Endothelial cell of umbilical vein (primary cell): ENCODE measurements at regions of chr12 and their contacts with region 1.

Region 1: GRCh38 chr12:14769969-14770495 is 33.2 kb downstream of the WBP11 start:
- DNase-seq: peak; percentile 77
- H3K4me3 ChIP-seq: peak overlapping the region; percentile 22 to 82 (median 70)
- H3K27ac ChIP-seq: peak overlapping the region; percentile 91
- H3K4me1 ChIP-seq: peaks cover 7% of the 10 kb centered on the region
- H3K27me3 ChIP-seq: no peaks in the 10 kb centered on the region
- CTCF ChIP-seq: peak; percentile 73 to 87
- POLR2A ChIP-seq: peak; percentile 25

Region 2: GRCh38 chr12:14257734-14258574 is 512.1 kb before region 1 on chr12:
- CTCF ChIA-PET with region 1: interaction called, 3 read pairs
- POLR2A ChIA-PET with region 1: no interaction called
- dilution Hi-C with region 1: no loop called
- intact Hi-C with region 1: loop called (anchors 2 kb)
- DNase-seq: peak; percentile 99
- H3K4me3 ChIP-seq: no peak overlapping the region
- H3K27ac ChIP-seq: peak overlapping the region; percentile 87
- H3K4me1 ChIP-seq: peaks cover 46% of the 10 kb centered on the region
- H3K27me3 ChIP-seq: no peaks in the 10 kb centered on the region
- CTCF ChIP-seq: no peak
- POLR2A ChIP-seq: no peak

Region 3: DNA sequence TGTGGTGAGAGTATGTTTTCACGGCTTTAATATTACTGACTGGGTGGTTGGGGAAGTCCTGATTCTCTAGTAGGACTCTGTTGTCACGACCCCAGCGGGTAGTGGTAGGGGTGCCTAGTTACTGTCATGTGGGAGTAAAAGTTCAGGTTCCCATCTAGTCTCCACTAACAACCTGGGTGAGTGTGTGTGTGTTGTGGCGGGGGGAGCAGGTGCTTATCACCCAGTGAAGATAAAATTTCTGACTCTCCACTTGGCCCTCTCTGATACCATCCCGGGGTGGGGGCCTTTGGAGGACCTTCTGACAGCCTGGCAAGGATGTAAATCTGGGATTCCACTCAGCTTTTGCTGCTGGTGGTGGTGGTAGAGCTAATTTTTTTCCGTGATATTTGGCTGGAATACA is 38.2 kb before region 1 on chr12:
- CTCF ChIA-PET with region 1: no interaction called
- POLR2A ChIA-PET with region 1: no interaction called
- dilution Hi-C with region 1: no loop called
- intact Hi-C with region 1: no loop called
- DNase-seq: no peak
- H3K4me3 ChIP-seq: no peak overlapping the region
- H3K27ac ChIP-seq: no peak overlapping the region
- H3K4me1 ChIP-seq: no peaks in the 10 kb centered on the region
- H3K27me3 ChIP-seq: peaks cover 5 to 6% of the 10 kb centered on the region in 2 experiments
- CTCF ChIP-seq: no peak
- POLR2A ChIP-seq: no peak

Region 4: DNA sequence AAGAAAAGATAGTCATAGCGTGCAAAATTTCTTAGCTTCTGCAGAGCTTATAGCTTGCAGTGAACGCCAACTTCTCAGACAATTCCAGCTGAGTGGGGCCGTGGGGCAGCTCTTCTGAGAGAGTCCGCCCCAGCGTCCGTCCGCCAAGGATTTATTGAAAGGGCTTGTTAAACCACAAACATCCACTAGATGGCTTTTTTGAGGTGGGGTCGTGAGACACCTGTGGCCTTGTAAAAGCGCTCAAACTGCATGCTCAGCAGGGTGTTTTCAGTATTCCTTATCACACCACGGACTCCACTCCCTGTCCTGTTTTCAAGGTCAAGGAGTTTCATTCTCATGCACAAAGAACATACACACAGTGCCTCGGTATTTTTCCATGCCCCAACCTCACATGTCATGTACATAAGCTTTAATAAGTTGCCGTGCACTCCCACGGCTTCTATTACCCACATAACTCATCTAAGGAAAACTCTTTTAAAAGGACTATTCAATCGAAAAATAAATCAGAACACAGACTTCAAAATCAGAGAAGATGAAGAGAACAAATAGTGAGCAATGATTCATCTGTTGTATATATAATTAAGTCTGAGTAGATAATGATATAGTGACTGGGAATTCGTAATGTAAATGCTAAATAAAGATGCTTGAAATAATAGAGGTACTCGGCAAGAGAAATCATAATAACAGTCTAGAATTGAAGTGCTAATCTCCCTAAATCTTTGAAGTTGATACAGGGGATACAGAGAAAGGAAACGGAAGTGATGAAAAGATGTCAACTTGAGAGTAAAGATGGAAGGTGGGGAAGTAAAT is 13.5 kb before region 1 on chr12:
- CTCF ChIA-PET with region 1: interaction called, 11 read pairs
- POLR2A ChIA-PET with region 1: interaction called, 3 read pairs
- dilution Hi-C with region 1: no loop called
- intact Hi-C with region 1: no loop called
- DNase-seq: no peak
- H3K4me3 ChIP-seq: no peak overlapping the region
- H3K27ac ChIP-seq: no peak overlapping the region
- H3K4me1 ChIP-seq: no peaks in the 10 kb centered on the region
- H3K27me3 ChIP-seq: peaks cover 0 to 2% of the 10 kb centered on the region in 2 experiments
- CTCF ChIP-seq: peak; percentile 39 to 40
- POLR2A ChIP-seq: no peak

Region 5: DNA sequence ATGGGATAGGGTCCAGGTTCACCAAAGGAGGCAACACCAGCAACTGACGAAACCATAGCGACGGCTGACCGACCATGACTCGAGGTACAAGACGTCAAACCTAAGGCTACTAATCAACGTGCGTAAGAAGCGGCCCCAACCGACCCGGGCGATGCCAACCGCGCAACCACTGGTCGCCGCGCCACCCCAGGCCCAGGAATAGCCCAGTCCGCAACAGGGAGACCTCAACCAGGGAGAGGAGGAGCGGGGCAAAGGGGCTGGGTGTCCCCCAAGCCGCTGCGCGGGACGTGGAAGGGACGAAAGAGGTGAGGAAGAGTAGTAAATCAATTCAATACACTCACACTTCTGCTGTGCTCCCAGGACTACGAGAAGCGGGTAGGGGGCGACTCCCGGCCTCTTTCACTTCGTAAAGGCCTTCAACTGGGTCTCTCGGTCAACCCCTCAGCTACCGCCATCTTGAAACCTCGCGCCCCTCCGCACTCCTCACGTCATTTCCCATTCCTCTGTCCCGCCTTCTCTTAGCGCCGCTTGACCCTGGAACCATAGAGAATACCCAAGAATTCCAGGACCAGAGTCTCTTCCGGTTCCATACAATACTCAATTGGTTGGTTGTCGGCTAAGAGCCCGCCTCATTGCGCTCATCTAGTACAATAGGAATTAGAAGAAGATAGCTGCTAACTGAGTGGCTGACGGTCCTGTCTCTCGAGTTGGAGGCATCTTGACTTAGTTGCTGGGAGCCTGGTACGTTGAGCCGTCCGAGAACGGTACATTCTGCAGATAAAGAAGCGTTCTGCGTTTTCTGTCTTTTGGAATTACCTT is 33.2 kb after region 1 on chr12 and contains the starts of genes C12orf60 and WBP11:
- CTCF ChIA-PET with region 1: interaction called, 20 read pairs
- POLR2A ChIA-PET with region 1: interaction called, 12 read pairs
- dilution Hi-C with region 1: no loop called
- intact Hi-C with region 1: loop called (anchors 1 kb)
- DNase-seq: peak; percentile 99
- H3K4me3 ChIP-seq: peak within 1 kb of the TSS; percentile 82 to 98 (median 97)
- H3K27ac ChIP-seq: peak within 1 kb of the TSS; percentile 90
- H3K4me1 ChIP-seq: peaks cover 17% of the 10 kb centered on the region
- H3K27me3 ChIP-seq: no peaks in the 10 kb centered on the region
- CTCF ChIP-seq: no peak
- POLR2A ChIP-seq: peak; percentile 92
- total RNA-seq, gene C12orf60: 1.1 and 1.3 TPM in 2 replicates
- total RNA-seq, gene WBP11: 70.5 and 77.1 TPM in 2 replicates

Region 6: GRCh38 chr12:14910090-14910915 is 140.3 kb after region 1 on chr12:
- CTCF ChIA-PET with region 1: no interaction called
- POLR2A ChIA-PET with region 1: no interaction called
- dilution Hi-C with region 1: no loop called
- intact Hi-C with region 1: loop called (anchors 5 kb)
- DNase-seq: peak; percentile 87
- H3K4me3 ChIP-seq: no peak overlapping the region
- H3K27ac ChIP-seq: peak overlapping the region; percentile 69
- H3K4me1 ChIP-seq: peaks cover 27% of the 10 kb centered on the region
- H3K27me3 ChIP-seq: no peaks in the 10 kb centered on the region
- CTCF ChIP-seq: no peak
- POLR2A ChIP-seq: peak; percentile 32

Region 7: GRCh38 chr12:14960548-14961465 is 190.8 kb after region 1 on chr12:
- CTCF ChIA-PET with region 1: no interaction called
- POLR2A ChIA-PET with region 1: no interaction called
- dilution Hi-C with region 1: no loop called
- intact Hi-C with region 1: loop called (anchors 2 kb)
- DNase-seq: peak; percentile 83
- H3K4me3 ChIP-seq: peak overlapping the region; percentile 57 to 78 (median 64)
- H3K27ac ChIP-seq: peak overlapping the region; percentile 80
- H3K4me1 ChIP-seq: peaks cover 52% of the 10 kb centered on the region
- H3K27me3 ChIP-seq: no peaks in the 10 kb centered on the region
- CTCF ChIP-seq: no peak
- POLR2A ChIP-seq: no peak